Dorsolateral prefrontal cortex (tissue), 120 donors: ENCODE measurements at regions of chr14 and their contacts with region 1.

Region 1: DNA sequence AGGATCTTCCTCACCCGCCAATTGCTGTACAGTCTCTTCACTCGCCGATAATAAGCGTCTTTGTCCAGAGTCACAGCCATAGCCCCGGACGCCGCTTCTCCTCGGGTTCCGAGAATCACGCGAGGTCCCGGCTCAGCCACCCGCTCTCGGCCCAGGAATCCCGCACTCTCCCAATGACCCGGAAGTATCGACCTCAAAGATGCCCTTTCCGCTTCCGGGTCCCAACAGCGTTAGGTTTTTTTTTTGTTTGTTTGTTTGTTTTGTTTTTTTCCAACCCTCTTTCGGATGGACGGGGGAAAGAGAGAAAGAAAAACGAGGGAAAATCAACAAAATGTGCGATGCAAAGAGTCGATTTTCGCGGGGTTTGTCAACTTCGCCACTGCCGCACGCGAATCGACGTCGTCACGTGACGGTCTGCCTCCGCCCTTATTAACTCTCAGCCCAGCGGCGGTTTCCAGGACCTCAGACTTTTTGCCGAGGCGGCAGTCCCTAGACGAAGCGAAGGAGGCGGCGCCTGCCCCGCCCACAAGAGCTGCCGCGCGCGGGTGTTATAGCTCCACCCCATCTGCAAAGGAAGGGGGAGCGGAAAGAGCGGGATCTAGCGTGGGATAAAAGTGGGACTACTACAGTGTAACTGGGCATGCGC is at the start of gene SUPT16H:
- DNase-seq: peak; percentile 81 to 94 (median 92)
- H3K4me3 ChIP-seq: peak within 1 kb of the TSS; percentile 67 to 99 (median 87)
- H3K27ac ChIP-seq: peak within 1 kb of the TSS; percentile 79 to 98 (median 95)
- H3K27me3 ChIP-seq: no peaks in the 10 kb centered on the region
- CTCF ChIP-seq: peak in 28 of 56 donors; percentile 5 to 50 (median 22)
- total RNA-seq, gene SUPT16H: 40.1 to 82.6 (median 62.0) TPM

Region 2: GRCh38 chr14:21437063-21437901 is 53.3 kb after region 1 on chr14:
- intact Hi-C with region 1: loop called in 1 of 2 experiments (anchors 5 kb)
- DNase-seq: peak; percentile 96 to 100 (median 99)
- H3K4me3 ChIP-seq: peak overlapping the region; percentile 51 to 98 (median 87)
- H3K27ac ChIP-seq: peak overlapping the region; percentile 19 to 96 (median 90)
- H3K27me3 ChIP-seq: no peaks in the 10 kb centered on the region
- CTCF ChIP-seq: peak in 19 of 56 donors; percentile 7 to 46 (median 25)